Right ventricle myocardium inferior (tissue), 1 donor: ENCODE measurements at regions of chr16 and their contacts with region 1.

Region 1: DNA sequence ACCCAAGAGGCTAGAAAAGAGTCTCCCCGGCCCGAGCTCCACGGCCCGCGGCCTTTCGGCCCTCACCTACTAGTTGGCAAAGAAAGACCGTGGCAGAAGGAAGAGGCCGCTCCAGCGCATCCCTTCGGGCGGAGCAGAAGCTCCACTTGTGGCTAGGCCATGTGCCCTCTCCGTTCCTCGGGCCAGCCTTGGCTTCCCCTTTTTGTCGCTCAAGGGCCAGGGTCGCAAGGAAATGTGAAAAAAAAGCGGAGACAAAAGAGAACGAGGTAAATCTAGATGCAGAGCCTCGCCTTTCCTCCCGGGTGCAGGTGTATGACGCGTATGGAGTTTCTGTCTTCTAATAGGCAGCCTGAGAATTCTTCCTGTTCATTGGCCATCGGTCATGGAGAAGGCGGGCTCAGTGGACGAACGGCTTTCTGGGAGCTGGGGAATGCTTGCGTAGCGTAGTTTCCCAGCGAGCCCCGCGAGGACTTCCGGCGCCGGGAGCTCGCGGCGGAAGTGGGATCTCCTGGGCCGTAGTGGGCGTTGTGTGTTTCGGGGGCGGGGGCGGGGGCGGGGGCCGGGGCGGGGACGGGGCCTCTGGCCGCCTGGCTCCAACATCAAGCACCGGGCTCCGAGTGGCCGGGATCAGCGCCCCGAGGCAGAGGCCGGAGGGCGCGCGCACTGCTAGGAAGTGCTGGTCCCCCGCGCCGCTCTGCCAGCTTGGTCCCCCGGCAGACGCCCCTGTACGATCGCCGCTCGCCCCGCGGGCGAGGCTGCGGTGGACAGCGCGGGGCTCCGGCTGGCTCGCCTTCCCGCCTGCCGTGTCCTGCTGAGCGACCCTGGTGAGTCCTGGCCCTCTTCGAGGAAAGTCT is at the start of gene ZNF213:
- DNase-seq: peak; percentile 96
- ATAC-seq: peak; percentile 96
- total RNA-seq, gene ZNF213: 6.2 TPM

Region 2: DNA sequence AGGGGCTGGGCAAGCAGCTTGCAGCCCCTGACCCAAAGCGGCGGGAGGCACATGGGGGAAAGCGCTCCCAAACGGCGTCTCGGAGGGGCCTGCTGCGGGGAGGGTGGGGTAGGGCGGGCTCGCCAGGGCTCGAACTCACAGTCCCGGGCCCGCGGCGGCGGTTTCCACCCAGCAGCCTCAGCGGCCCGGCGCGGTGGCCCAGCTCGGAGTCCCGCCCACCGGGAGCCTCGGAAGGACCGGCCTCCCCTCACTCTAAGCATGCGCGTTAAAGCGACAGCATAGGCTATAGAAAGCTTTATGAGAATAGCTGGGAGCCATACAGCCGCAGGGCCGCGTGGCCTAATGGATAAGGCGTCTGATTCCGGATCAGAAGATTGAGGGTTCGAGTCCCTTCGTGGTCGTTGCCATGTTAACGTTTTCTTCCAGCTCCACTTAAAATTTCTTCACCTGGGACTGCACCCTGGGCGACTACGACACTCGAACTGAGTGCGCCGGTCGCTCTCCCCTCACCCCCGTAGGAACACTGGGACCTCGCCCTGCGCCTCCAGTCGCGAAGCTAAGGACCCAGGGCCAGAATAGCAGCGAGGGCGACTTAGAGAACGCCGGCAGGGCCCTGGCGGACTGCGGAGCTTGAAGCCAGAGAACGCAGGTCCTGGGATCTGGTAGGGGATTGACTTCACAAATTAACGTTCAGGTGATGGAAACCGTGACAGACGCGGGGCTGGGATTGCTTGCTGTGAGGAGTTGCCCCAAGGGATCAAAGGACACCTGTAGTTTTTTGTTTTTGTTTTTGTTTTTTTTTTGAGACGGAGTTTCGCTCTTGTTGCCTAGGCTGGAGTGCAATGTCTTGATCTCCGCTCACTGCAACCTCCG is 15.8 kb after region 1 on chr16:
- intact Hi-C with region 1: loop called (anchors 2 kb)
- DNase-seq: peak; percentile 96
- ATAC-seq: peak; percentile 94

Region 3: DNA sequence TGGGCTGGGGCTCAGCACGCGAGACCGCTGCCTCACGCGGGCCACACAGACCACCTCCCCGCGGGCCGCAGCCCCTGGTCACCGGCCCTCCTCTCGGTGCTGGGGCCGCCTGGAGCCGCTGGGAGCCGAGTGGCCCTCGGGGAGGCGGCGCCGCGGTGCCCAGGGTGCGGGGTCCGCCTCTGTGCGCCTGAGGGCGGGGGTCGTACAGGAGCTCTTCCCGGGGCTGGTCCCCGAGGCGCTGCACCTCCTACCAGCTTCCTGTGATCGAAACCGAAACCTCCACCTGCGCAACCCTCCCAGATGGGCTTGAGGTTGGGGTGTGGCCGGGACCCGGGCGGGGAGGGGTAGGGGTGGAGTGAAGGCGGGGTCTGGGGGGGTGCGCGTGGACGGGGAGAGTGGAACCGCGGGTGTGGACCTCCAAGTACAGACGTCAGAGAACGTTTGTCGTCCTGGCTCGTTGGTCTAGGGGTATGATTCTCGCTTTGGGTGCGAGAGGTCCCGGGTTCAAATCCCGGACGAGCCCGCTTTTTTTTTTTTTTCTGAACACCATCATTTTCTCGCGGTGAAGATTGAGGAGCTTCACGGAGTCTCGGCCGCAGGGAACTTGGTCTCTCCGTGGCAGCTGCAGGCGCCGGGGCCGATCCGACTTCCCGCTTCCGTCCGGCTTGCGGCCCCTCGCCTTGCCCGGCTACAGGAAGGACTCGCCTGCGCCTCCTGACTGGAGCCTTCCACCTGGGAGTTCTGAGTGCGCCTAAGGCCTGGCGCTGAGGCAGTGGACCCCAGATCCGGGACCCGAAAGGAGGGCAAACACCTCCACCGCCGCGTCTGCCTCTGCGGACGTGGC is 23.9 kb after region 1 on chr16:
- intact Hi-C with region 1: loop called (anchors 2 kb)
- DNase-seq: peak; percentile 87
- ATAC-seq: peak; percentile 90

Region 4: DNA sequence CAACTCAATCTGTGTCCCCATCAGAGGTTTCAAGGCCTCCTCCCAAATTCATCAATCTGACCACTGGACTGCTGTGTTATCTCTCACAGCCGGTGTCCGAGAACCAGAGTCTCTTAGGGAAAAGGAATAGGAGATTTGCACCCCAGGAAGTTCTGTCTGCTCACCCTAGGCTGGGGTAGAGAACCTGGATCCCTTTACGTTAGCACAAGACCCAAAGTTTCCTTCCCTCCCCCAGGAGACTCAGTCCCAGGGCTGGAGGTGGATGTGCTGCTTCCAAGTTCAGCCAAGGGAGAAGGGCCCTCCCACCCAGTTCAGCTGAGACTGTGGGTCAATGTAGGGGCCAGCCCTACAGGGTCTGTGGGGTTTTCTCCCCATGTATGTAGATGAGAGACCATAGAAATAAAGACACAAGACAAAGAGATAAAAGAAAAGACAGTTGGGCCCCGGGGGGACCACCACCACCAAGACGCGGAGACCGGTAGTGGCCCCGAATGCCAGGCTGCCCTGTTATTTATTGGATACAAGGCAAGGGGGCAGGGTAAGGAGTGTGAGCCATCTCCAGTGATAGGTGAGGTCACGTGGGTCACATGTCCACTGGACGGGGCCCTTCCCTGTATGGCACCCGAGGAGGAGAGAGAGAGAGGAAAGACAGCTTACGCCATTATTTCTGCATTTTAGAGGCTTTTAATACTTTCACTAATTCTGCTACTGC is 30.5 kb after region 1 on chr16:
- intact Hi-C with region 1: loop called (anchors 2 kb)
- DNase-seq: no peak
- ATAC-seq: no peak

Region 5: DNA sequence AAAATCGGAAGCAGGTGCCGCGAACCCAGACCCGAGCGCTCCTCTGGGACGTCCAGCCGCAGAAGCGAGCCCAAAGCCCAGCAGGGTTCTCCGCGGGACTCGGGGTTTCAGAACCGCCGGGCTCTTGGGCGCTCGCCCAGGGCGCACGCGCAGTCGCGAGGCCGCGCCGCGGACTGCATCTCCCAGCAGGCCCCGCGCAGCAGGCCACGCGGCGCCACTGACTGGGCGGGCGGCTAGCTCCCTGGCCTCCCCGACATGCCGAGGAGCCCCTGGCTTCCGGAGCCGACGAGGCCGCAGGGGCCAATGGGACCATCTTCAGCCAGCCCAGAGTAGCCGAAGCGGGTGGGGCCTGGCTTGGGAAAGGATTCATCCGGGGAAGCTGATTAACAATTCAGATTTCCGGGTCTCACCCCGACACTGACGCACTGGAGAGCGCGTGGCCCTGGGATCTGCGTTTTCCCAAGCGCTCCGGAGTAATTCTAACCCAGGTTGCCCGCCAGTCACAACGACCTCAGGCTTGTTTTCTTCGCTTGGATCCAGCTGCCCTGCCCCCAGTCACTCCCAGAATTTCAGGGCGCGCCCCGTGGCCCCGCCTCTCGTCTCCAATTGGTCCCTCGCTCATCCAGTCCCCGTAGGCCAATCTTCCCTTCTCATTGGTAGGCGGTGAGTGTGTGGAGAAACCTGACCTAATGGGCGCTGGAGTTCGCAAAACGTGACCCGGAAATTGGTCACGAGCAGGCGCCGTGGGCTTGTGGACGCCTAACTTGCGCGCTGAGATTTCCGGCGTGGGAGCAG is 148.1 kb after region 1 on chr16 and contains the start of gene ZNF263:
- intact Hi-C with region 1: no loop called
- DNase-seq: peak; percentile 97
- ATAC-seq: peak; percentile 97
- total RNA-seq, gene ZNF263: 8.4 TPM